ENCODE measurements at regions of chr6 and their contacts with region 1.

Region 1: GRCh38 chr6:37207903-37208456 is 38.0 kb downstream of the PIM1 start:
- DNase-seq: peak; percentile 89 to 92
- H3K4me3 ChIP-seq: no peak overlapping the region
- H3K4me3 Mint-ChIP-seq: no peak overlapping the region
- H3K27ac Mint-ChIP-seq: no peak overlapping the region
- H3K4me1 ChIP-seq: peaks cover 25% of the 10 kb centered on the region
- H3K4me1 Mint-ChIP-seq: peaks cover 26% of the 10 kb centered on the region
- H3K27me3 ChIP-seq: no peaks in the 10 kb centered on the region
- H3K27me3 Mint-ChIP-seq: no peaks in the 10 kb centered on the region
- CTCF ChIP-seq: peak; percentile 87 to 89

Region 2: GRCh38 chr6:36885461-36886401 is 322.2 kb before region 1 on chr6 and contains the start of gene C6orf89:
- CTCF ChIA-PET with region 1: interaction called, 4 read pairs
- POLR2A ChIA-PET with region 1: no interaction called
- intact Hi-C with region 1: loop called (anchors 2 kb)
- DNase-seq: peak; percentile 94 to 97
- H3K4me3 ChIP-seq: peak within 1 kb of the TSS; percentile 80
- H3K4me3 Mint-ChIP-seq: peak within 1 kb of the TSS; percentile 83
- H3K27ac Mint-ChIP-seq: peak within 1 kb of the TSS; percentile 80
- H3K4me1 ChIP-seq: peaks cover 4% of the 10 kb centered on the region; the same call in 1 of the 2 replicates
- H3K4me1 Mint-ChIP-seq: peaks cover 16% of the 10 kb centered on the region
- H3K27me3 ChIP-seq: no peaks in the 10 kb centered on the region
- H3K27me3 Mint-ChIP-seq: no peaks in the 10 kb centered on the region
- CTCF ChIP-seq: peak; percentile 84 to 88
- total RNA-seq, gene C6orf89: 24.4 and 24.5 TPM in 2 replicates

Region 3: DNA sequence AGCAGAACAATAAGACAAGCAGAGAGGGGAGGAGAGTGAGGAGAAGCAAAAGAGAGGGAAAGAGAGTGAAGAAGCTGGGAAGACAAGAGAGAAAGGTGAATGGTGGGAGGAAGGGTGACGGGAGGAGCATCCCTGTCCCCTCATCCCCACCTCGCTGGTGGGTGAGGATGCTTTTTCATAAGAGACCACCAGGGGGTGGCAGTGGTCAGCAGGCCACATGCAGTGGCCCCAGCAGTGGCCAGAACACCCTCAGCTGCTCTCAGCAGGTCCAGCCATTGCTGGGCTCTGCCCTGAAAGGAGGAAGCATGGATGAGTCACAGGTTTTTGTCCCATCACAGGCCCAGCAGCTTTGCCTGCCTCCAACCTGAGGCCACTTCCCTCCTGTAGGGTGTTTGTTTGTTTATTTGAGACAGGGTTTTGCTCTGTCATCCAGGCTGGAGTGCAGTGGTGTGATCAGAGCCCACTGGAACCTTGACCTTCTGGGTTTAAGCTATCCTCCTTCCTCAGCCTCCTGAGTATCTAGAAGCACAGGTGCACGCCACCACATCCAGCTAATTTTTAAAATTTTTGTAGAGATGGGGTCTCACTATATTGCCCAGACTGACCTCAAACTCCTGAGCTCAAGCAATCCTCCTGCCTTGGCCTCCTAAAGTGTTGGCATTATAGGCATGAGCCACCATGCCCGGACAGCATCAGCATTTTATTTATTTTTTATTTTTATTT is 178.6 kb before region 1 on chr6:
- CTCF ChIA-PET with region 1: interaction called, 163 read pairs
- POLR2A ChIA-PET with region 1: no interaction called
- intact Hi-C with region 1: loop called (anchors 1 kb)
- DNase-seq: peak; percentile 78 to 80
- H3K4me3 ChIP-seq: no peak overlapping the region
- H3K4me3 Mint-ChIP-seq: no peak overlapping the region
- H3K27ac Mint-ChIP-seq: no peak overlapping the region
- H3K4me1 ChIP-seq: no peaks in the 10 kb centered on the region
- H3K4me1 Mint-ChIP-seq: peaks cover 7% of the 10 kb centered on the region
- H3K27me3 ChIP-seq: no peaks in the 10 kb centered on the region
- H3K27me3 Mint-ChIP-seq: no peaks in the 10 kb centered on the region
- CTCF ChIP-seq: peak; percentile 77 to 78

Region 4: DNA sequence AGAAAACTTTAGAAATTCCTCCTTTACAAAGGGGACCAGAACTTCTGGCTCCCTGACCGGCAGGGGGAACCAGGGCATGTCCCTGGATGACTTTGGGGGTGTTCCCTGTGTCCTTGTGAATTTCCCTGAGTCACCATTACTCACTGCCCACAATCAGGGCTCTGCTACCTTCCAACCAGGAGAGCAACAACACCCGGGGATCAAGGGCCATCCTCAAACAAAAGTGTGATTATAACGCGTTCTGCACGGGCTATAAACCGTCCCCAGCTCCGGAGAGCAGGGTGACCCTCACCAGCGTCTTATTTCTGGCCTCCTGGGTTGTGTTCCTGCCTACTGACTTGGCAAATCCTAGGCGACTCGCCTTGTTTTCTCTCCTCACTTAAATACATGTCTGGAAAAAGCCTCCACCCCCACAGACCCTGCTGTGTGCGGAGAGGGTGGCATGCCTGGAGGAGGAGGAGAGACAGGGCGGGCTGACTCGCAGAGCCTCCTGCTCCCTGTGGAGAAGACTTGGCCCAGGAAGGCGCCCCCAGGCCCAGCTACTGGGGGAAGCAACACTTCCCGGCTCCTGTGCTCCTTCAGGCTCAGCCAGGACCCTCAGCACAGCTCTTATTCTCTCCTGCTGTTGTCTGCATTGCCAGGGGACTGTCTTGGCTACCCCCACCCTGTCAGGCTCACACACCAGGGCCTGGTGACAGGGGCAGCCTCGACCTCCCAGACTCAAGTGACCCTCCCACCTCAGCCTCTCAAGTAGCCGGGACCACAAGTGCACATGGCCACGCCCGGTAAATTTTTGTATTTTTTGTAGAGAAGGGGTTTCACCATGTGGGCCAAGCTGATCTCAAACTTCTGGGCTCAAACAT is 148.4 kb before region 1 on chr6:
- CTCF ChIA-PET with region 1: interaction called, 7 read pairs
- POLR2A ChIA-PET with region 1: no interaction called
- intact Hi-C with region 1: loop called (anchors 2 kb)
- DNase-seq: peak; percentile 87 to 89
- H3K4me3 ChIP-seq: no peak overlapping the region
- H3K4me3 Mint-ChIP-seq: peak overlapping the region; percentile 34
- H3K27ac Mint-ChIP-seq: peak overlapping the region; percentile 95
- H3K4me1 ChIP-seq: peaks cover 22% of the 10 kb centered on the region
- H3K4me1 Mint-ChIP-seq: peaks cover 18% of the 10 kb centered on the region
- H3K27me3 ChIP-seq: no peaks in the 10 kb centered on the region
- H3K27me3 Mint-ChIP-seq: no peaks in the 10 kb centered on the region
- CTCF ChIP-seq: peak; percentile 57 to 88

Region 5: DNA sequence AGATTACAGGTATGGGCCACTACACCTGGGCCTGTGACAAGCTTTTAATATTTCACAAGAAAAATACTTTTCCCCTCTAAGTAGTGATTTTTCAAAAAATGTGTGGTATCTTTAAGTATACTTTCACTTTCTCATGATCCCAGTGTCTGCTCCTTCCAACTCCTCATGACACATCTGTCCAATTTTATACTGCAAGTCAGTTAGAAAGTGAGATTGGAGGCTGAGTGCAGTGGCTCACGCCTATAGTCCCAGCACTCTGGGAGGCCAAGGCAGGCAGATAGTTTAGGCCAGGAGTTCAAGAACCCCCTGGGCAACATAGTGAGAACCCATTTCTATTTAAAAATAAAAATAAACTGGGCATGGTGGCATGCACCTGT is 17.8 kb before region 1 on chr6:
- CTCF ChIA-PET with region 1: interaction called, 10 read pairs
- POLR2A ChIA-PET with region 1: no interaction called
- intact Hi-C with region 1: no loop called
- DNase-seq: no peak
- H3K4me3 ChIP-seq: no peak overlapping the region
- H3K4me3 Mint-ChIP-seq: no peak overlapping the region
- H3K27ac Mint-ChIP-seq: no peak overlapping the region
- H3K4me1 ChIP-seq: peaks cover 4% of the 10 kb centered on the region; the same call in 1 of the 2 replicates
- H3K4me1 Mint-ChIP-seq: peaks cover 7% of the 10 kb centered on the region
- H3K27me3 ChIP-seq: no peaks in the 10 kb centered on the region
- H3K27me3 Mint-ChIP-seq: no peaks in the 10 kb centered on the region
- CTCF ChIP-seq: no peak

Region 6: DNA sequence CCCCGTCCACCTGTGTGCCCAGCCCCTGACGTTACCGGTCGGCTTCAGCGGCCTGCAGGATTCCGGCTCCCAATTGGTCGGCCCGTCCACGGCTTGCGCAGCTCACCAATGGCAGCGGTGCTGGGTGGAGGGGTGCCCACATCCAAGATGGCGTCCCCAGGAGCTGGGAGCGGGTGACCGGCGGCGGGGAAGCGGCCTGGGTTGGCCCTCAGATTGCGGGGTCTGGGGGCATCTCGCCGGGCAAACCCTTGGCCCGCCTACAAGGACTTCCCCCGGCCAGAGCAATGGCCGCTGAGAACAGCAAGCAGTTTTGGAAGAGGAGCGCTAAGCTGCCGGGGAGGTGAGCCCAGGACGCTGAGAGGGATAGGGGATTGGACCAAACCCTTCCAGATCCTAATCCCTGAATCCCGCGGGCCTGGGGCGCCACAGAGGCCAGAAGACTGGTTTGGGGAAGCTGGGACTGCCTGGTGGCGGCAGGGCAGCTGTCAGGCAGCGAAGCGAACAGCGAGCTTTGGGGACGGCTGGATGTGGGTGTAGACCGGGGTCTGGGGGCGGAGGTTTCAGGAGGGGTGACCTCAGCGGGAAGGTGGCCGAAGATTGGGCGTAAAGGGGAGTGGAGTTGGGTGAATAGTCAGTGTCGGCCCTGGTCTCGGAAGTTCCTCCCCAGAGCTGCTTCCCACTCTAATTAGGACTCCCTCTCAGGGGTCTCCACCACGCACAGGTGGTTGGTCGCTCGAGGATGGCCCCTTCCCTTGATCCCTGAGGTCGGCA is 49.8 kb after region 1 on chr6 and contains the starts of genes TBC1D22B and TMEM217:
- CTCF ChIA-PET with region 1: interaction called, 15 read pairs
- POLR2A ChIA-PET with region 1: no interaction called
- intact Hi-C with region 1: no loop called
- DNase-seq: peak; percentile 98
- H3K4me3 ChIP-seq: peak within 1 kb of the TSS; percentile 81
- H3K4me3 Mint-ChIP-seq: peak within 1 kb of the TSS; percentile 97
- H3K27ac Mint-ChIP-seq: peak within 1 kb of the TSS; percentile 95
- H3K4me1 ChIP-seq: peaks cover 4% of the 10 kb centered on the region; the same call in 1 of the 2 replicates
- H3K4me1 Mint-ChIP-seq: peaks cover 19% of the 10 kb centered on the region
- H3K27me3 ChIP-seq: no peaks in the 10 kb centered on the region
- H3K27me3 Mint-ChIP-seq: no peaks in the 10 kb centered on the region
- CTCF ChIP-seq: no peak
- total RNA-seq, gene TBC1D22B: 11.8 and 13.5 TPM in 2 replicates
- total RNA-seq, gene TMEM217: 1.6 and 2.6 TPM in 2 replicates

Measured in Caco-2 (cell line).